CD4-positive, alpha-beta memory T cell (primary cell): ENCODE measurements at regions of chr14 and their contacts with region 1.

Region 1: DNA sequence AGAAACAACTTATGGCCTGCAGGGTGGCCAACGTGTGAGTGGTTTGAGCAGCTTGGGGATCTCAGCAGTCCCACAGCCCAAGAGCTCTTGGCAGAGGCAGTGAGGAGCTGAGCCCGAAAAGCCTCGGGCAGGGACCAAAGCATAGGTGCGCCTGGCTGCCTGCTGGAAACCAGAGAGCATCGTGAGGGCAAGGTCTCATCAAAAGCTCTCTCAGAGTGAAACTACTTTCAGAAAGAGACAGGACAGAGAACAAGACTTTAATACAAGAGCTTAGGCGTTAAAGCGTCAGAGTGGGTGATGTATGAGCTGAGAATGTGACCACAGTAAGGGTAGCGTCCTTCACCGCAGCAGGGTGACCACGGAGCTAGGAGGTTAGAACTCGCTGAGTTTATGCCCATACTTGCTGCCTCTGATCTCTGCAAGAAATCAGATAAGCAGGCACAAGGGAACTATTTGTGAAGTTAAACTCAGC is 30.8 kb downstream of the LGMN start:
- DNase-seq: peak in 1 of 5 donors; percentile 12
- H3K4me3 ChIP-seq: no peak overlapping the region
- H3K4me3 Mint-ChIP-seq: peak overlapping the region in 2 of 8 donors; percentile 21 to 23
- H3K27ac ChIP-seq: no peak overlapping the region
- H3K27ac Mint-ChIP-seq: peak overlapping the region in 1 of 7 donors; percentile 14
- H3K4me1 ChIP-seq: no peaks in the 10 kb centered on the region
- H3K4me1 Mint-ChIP-seq: peaks cover 0 to 5% (median 2%) of the 10 kb centered on the region in 4 donors
- H3K27me3 ChIP-seq: no peaks in the 10 kb centered on the region
- H3K27me3 Mint-ChIP-seq: no peaks in the 10 kb centered on the region

Region 2: DNA sequence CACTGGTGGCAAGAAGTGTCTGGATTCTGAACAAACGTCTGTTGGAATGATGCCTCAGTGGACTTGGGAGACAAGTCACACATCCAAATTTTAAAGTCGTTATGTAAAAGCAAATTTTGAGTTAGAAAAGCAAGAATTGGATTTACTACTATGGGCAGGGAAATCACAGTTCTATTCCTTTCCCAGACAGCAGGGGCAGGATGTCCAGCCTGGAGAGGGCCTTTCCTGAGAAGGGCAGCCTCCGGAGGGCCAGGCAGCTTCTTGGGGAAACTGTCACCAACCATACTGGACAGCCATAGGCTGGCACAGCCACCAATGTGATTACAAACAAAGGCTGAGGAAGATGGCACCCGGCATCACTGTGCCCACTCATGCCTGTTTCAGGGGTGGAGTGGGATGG is 383.6 kb before region 1 on chr14:
- CTCF ChIA-PET with region 1: no interaction called
- POLR2A ChIA-PET with region 1: no interaction called
- intact Hi-C with region 1: no loop called
- DNase-seq: no peak
- H3K4me3 ChIP-seq: no peak overlapping the region
- H3K4me3 Mint-ChIP-seq: no peak overlapping the region
- H3K27ac ChIP-seq: no peak overlapping the region
- H3K27ac Mint-ChIP-seq: no peak overlapping the region
- H3K4me1 ChIP-seq: no peaks in the 10 kb centered on the region
- H3K4me1 Mint-ChIP-seq: no peaks in the 10 kb centered on the region
- H3K27me3 ChIP-seq: no peaks in the 10 kb centered on the region
- H3K27me3 Mint-ChIP-seq: peaks cover 1 to 4% of the 10 kb centered on the region in 2 donors

Region 3: GRCh38 chr14:92651106-92651757 is 66.4 kb before region 1 on chr14:
- CTCF ChIA-PET with region 1: no interaction called
- POLR2A ChIA-PET with region 1: no interaction called
- intact Hi-C with region 1: no loop called
- DNase-seq: peak; percentile 82 to 95 (median 85)
- H3K4me3 ChIP-seq: peak overlapping the region; percentile 47 to 58
- H3K4me3 Mint-ChIP-seq: peak overlapping the region; percentile 92 to 99 (median 98)
- H3K27ac ChIP-seq: peak overlapping the region; percentile 84
- H3K27ac Mint-ChIP-seq: peak overlapping the region; percentile 96 to 100 (median 99)
- H3K4me1 ChIP-seq: peaks cover 80% of the 10 kb centered on the region
- H3K4me1 Mint-ChIP-seq: peaks cover 51 to 94% (median 67%) of the 10 kb centered on the region in 4 donors
- H3K27me3 ChIP-seq: no peaks in the 10 kb centered on the region
- H3K27me3 Mint-ChIP-seq: no peaks in the 10 kb centered on the region

Region 4: DNA sequence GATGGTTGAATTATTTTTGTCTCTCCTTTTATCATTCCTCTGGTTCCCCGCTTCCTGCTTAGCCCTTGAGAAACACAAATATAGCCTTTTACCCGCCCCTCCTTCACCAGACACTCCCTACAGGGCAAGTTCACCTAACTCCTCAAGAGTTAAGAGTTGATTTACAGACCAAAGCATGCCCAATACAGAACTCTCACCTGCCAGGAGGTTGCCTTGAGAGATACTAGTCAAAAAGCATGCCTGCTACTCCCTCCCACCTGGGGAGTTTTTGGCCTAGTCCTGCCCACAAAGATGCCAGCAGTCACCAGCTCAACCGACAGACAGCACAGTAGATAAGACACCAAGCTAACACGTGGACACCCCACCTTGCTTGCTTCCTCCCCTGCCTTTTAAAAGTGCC is 19.6 kb after region 1 on chr14:
- CTCF ChIA-PET with region 1: no interaction called
- POLR2A ChIA-PET with region 1: no interaction called
- intact Hi-C with region 1: no loop called
- DNase-seq: no peak
- H3K4me3 ChIP-seq: no peak overlapping the region
- H3K4me3 Mint-ChIP-seq: peak overlapping the region in 1 of 8 donors; percentile 0
- H3K27ac ChIP-seq: no peak overlapping the region
- H3K27ac Mint-ChIP-seq: peak overlapping the region in 4 of 7 donors; percentile 61 to 76 (median 65)
- H3K4me1 ChIP-seq: no peaks in the 10 kb centered on the region
- H3K4me1 Mint-ChIP-seq: peaks cover 0 to 6% (median 2%) of the 10 kb centered on the region in 4 donors
- H3K27me3 ChIP-seq: no peaks in the 10 kb centered on the region
- H3K27me3 Mint-ChIP-seq: no peaks in the 10 kb centered on the region

Region 5: DNA sequence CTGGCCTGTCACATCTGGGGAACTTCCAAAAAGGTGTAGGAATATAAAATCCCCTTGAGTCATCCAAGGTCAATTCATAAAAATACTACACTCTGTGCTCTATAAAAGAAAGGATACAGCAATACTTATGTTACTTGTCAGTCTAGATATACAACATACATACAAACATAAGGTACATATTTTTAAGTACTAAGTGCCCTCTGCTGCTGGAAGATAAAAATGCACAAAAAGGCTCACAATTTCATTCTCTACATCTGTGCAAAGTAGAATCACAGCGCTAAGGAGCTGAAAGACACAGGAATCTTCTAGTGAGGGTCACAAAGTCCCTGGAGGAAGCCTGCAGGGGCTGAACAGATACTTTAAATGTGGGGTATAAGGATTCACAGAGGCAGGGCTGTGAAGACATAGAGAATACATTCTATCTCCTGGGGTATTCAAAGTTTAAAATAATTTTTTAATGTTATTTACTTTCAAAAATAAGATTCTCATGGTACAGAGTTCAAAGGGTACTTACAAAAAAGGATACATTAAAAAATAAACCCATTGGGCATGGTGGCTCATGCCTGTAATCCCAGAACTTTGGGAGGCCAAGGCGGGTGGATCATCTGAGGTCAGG is 66.3 kb after region 1 on chr14:
- CTCF ChIA-PET with region 1: interaction called, 45 read pairs
- POLR2A ChIA-PET with region 1: no interaction called
- intact Hi-C with region 1: loop called (anchors 1 kb)
- DNase-seq: peak in 4 of 5 donors; percentile 39 to 53 (median 42)
- H3K4me3 ChIP-seq: no peak overlapping the region
- H3K4me3 Mint-ChIP-seq: no peak overlapping the region
- H3K27ac ChIP-seq: no peak overlapping the region
- H3K27ac Mint-ChIP-seq: no peak overlapping the region
- H3K4me1 ChIP-seq: no peaks in the 10 kb centered on the region
- H3K4me1 Mint-ChIP-seq: peaks cover 0 to 6% (median 3%) of the 10 kb centered on the region in 4 donors
- H3K27me3 ChIP-seq: no peaks in the 10 kb centered on the region
- H3K27me3 Mint-ChIP-seq: no peaks in the 10 kb centered on the region